Left lung (tissue), 14 donors: ENCODE measurements at regions of chr2 and their contacts with region 1.

Region 1: DNA sequence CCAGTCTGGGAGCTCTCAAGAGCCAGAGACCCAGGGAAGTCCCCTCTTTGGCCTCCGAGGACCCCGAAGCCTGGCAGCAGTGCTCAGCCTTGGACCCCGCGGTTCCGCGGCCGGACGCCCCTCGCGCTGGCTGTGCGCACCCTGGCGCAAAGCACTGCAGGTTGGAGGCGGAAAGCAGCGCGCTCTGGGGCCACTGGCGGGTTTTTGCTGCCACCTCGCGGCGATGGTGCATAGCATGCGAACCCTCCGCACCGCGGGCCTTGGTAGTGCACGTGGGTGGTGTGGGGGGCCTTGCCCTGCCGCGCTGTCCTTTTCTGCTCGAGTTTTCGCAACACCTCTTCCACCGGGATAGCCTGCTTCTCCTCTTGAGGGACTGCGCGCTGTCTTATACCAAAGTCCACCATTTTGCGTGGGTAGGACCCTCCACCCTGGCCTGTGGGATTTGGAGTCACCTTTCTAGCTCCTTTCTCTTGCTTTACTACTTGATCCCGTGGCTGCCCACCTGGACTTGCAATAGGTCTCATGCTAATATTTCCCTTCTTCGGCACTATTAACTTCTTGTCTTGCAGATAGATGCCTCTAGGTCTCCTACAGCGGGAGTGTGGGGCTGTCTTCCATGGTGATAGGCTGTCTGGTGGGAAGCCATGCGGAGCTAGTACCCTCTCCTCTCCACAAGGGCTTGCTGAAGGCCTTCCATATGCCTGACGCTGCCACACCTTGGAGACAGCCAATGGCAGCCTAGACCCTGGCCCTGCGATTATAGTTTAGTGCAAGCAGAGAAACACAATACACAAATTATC is 14.3 kb downstream of the SIX3 start:
- DNase-seq: peak; percentile 65 to 94 (median 76)
- ATAC-seq: peak; percentile 87
- H3K4me3 ChIP-seq: no peak overlapping the region
- H3K27ac ChIP-seq: no peak overlapping the region
- H3K4me1 ChIP-seq: peaks cover 16 to 30% of the 10 kb centered on the region in 2 donors
- H3K27me3 ChIP-seq: peaks cover 44 to 93% of the 10 kb centered on the region in 2 donors
- CTCF ChIP-seq: peak; percentile 84 to 91

Region 2: DNA sequence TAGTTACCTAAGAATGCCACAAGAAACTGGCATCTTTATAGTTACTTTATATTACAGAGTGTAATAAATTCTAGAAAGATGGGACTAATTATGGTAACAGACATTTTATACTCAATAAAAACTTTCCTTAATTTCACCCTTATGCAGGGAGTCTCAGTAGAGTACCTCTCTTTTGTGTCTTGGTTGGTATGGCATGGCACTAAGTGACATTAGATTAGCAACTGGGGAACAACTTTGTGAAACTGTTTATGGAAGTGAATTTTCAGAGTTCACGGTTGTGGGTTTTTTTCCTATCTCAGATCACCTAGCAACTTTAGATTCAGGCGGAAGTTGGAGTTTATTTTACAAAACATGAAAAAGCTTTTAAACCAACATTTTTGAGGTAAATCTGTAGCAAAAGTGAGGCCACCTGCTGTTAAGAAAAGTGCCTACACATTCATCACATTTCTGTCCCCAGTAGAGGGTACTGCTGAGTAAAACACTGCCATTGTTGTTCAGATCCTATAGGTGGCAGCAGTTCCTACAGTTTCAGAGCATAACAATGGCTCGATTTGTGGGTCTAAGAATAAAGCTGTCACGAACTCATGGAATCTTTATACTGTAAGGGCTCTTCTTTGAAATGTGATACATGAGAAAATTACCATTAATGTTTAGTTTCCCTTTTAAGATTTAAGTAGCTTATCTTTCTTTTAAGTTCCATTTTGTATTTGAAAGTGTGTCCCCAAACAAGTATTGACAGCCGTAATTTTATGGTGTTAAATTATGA is 476.5 kb before region 1 on chr2:
- intact Hi-C with region 1: loop called in 1 of 2 experiments (anchors 10 kb)
- DNase-seq: peak in 2 of 4 donors; percentile 67 to 85
- ATAC-seq: peak; percentile 100
- H3K4me3 ChIP-seq: no peak overlapping the region
- H3K27ac ChIP-seq: no peak overlapping the region
- H3K4me1 ChIP-seq: no peaks in the 10 kb centered on the region
- H3K27me3 ChIP-seq: no peaks in the 10 kb centered on the region
- CTCF ChIP-seq: peak; percentile 87 to 99

Region 3: DNA sequence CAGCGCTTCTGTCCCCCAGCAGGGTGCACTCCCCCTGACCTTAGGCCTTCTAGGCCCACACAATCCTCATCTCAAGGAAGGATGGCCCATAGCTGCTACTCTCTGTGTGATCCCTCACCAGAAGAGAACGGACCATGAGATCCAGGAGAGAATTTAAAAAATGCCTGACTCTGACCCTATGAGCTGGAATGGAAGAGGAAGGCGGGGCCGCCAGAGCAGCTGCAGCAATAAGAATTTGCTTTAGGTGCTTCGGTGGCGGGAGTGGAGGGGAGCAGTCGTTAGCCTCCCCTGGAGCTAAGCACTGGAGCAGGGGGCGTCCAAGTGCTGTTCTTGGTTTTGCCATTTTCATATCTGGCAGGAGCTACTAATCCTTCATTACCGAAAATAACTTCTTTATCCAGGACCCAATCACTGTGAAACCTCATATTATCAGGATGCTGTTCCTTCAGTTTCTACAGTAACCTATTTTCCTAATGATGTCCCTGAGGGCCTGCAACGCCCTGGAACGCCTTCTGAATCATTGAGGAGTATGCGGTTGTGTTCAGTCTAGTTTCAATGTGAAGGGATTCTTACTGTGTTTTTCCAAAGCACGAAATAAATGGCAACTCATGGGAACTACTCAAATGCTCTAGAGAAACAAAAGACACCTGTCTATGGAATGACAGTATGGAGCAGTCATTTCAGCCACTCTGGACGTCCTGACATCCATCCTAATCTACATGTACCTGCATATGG is 158.6 kb after region 1 on chr2:
- intact Hi-C with region 1: no loop called
- DNase-seq: no peak
- ATAC-seq: no peak
- H3K4me3 ChIP-seq: no peak overlapping the region
- H3K27ac ChIP-seq: no peak overlapping the region
- H3K4me1 ChIP-seq: no peaks in the 10 kb centered on the region
- H3K27me3 ChIP-seq: no peaks in the 10 kb centered on the region
- CTCF ChIP-seq: no peak